Mammary epithelial cell (primary cell): ENCODE measurements at regions of chr6 and their contacts with region 1.

Region 1: GRCh38 chr6:16206595-16207037 is 31.8 kb upstream of the GMPR start:
- DNase-seq: peak; percentile 64
- H3K4me3 ChIP-seq: no peak overlapping the region
- H3K27ac ChIP-seq: no peak overlapping the region
- H3K4me1 ChIP-seq: no peaks in the 10 kb centered on the region
- H3K27me3 ChIP-seq: no peaks in the 10 kb centered on the region
- CTCF ChIP-seq: peak; percentile 86 to 97

Region 2: DNA sequence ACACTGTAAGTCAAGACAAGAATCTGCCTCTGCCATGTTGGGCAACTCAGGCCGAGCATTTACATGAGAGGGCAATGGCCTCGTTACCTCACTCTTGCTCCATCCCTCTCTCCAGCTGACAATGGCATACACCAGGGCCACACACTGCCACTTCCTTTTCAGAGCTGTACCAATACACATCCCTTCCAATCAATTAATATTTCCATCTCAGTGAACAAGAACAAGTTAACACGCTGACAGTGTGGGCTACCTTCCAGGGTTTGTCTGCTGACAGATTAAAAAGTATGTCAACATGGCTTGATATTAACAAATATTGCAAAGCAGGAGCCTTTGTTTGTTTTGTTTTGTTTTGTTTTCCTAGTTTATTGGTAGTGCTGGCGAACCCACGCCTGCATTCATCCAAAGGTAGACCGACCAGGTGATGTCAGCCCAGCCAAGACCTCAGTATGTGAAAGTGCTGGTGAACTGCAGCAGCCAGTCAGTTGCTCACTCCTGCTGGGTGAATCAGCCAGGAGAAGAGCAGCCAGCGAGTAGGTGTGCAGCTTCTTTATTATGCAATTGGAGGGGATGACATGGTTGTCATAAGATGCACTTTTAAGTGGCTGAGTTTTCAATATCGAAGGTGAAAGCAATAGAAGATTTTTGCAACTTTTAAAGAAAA is 1448.1 kb before region 1 on chr6:
- CTCF ChIA-PET with region 1: no interaction called
- dilution Hi-C with region 1: no loop called
- in situ Hi-C with region 1: no loop called
- intact Hi-C with region 1: no loop called
- DNase-seq: peak; percentile 92
- H3K4me3 ChIP-seq: no peak overlapping the region
- H3K27ac ChIP-seq: no peak overlapping the region
- H3K4me1 ChIP-seq: peaks cover 19% of the 10 kb centered on the region
- H3K27me3 ChIP-seq: no peaks in the 10 kb centered on the region
- CTCF ChIP-seq: no peak

Region 3: DNA sequence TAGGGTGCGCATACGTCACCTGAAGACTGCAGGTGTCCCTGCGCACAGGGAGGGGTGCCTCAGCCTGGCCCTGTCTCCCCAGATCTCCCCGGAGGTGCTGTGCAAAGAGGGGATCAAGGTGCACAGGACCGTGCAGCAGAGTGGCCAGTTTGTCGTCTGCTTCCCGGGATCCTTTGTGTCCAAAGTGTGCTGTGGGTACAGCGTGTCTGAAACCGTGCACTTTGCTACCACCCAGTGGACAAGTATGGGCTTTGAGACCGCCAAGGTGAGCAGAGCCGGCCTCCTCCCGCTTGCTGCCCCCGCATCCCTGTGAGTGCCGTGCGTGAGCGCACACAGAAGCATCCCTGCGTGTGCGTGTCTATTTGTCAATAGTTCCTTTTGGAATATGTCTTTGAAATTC is 694.5 kb before region 1 on chr6:
- CTCF ChIA-PET with region 1: no interaction called
- dilution Hi-C with region 1: no loop called
- in situ Hi-C with region 1: no loop called
- intact Hi-C with region 1: loop called (anchors 10 kb)
- DNase-seq: no peak
- H3K4me3 ChIP-seq: no peak overlapping the region
- H3K27ac ChIP-seq: no peak overlapping the region
- H3K4me1 ChIP-seq: peaks cover 8% of the 10 kb centered on the region
- H3K27me3 ChIP-seq: no peaks in the 10 kb centered on the region
- CTCF ChIP-seq: no peak